CD4-positive, alpha-beta memory T cell (primary cell): ENCODE measurements at regions of chr10 and their contacts with region 1.

Region 1: GRCh38 chr10:97278491-97278989 is 13.9 kb downstream of the ARHGAP19 start:
- DNase-seq: peak in 4 of 5 donors; percentile 47 to 54 (median 53)
- H3K4me3 ChIP-seq: no peak overlapping the region
- H3K4me3 Mint-ChIP-seq: no peak overlapping the region
- H3K27ac ChIP-seq: no peak overlapping the region
- H3K27ac Mint-ChIP-seq: peak overlapping the region in 1 of 7 donors; percentile 51
- H3K4me1 ChIP-seq: peaks cover 4% of the 10 kb centered on the region
- H3K4me1 Mint-ChIP-seq: peaks cover 6 to 12% (median 9%) of the 10 kb centered on the region in 4 donors
- H3K27me3 ChIP-seq: no peaks in the 10 kb centered on the region
- H3K27me3 Mint-ChIP-seq: no peaks in the 10 kb centered on the region

Region 2: DNA sequence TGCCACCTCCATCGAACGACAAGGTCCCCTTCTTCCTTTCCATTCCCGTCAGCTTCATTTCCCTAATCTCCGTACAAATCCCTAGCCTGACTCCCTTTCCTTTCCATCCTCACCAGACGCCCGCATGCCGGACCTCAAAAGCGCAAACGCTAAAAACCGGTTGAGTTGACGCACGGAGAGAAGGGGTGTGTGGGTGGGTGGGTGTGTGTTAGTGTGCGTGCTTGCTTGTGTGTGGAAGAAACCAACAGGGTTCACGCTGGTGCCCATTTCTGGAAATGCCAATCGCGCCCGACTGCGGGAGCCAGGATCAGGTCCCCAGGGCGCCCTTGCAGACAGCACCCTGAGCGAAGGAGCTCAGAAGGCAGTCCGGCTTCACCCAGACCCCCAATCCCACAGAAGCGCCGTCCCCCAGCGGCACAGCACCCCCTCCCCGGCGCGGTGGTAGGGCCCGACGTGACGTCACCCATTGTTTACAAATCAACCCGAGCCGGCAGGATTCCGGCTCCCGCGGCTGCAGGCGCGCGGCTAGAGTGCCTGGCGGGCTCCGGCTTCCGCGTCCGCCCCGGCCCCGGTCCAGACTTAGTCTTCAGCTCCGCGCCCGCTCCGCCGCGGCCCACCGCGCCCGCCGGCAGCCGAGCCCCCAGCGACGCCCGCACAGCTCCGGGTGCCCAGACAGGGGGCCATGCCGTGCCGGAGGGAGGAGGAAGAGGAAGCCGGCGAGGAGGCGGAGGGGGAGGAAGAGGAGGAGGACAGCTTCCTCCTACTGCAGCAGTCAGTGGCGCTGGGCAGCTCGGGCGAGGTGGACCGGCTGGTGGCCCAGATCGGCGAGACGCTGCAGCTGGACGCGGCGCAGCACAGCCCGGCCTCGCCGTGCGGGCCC is 40.5 kb after region 1 on chr10 and contains the start of gene FRAT1:
- CTCF ChIA-PET with region 1: interaction called, 18 read pairs
- POLR2A ChIA-PET with region 1: interaction called, 16 read pairs
- intact Hi-C with region 1: loop called (anchors 2 kb)
- DNase-seq: peak; percentile 90 to 97 (median 94)
- H3K4me3 ChIP-seq: peak within 1 kb of the TSS; percentile 50 to 84
- H3K4me3 Mint-ChIP-seq: peak within 1 kb of the TSS; percentile 93 to 99 (median 96)
- H3K27ac ChIP-seq: peak within 1 kb of the TSS; percentile 99
- H3K27ac Mint-ChIP-seq: peak within 1 kb of the TSS; percentile 96 to 100 (median 99)
- H3K4me1 ChIP-seq: peaks cover 21% of the 10 kb centered on the region
- H3K4me1 Mint-ChIP-seq: peaks cover 16 to 44% (median 31%) of the 10 kb centered on the region in 4 donors
- H3K27me3 ChIP-seq: no peaks in the 10 kb centered on the region
- H3K27me3 Mint-ChIP-seq: peaks cover 0 to 3% of the 10 kb centered on the region in 2 donors
- total RNA-seq, gene FRAT1: 20.2 to 21.8 TPM

Region 3: GRCh38 chr10:97334370-97335175 is 56.0 kb after region 1 on chr10 and contains the start of gene FRAT2:
- CTCF ChIA-PET with region 1: interaction called, 31 read pairs
- POLR2A ChIA-PET with region 1: interaction called, 11 read pairs
- intact Hi-C with region 1: loop called (anchors 2 kb)
- DNase-seq: peak; percentile 86 to 95 (median 92)
- H3K4me3 ChIP-seq: peak within 1 kb of the TSS; percentile 64 to 67
- H3K4me3 Mint-ChIP-seq: peak within 1 kb of the TSS; percentile 88 to 95 (median 92)
- H3K27ac ChIP-seq: peak within 1 kb of the TSS; percentile 98
- H3K27ac Mint-ChIP-seq: peak within 1 kb of the TSS; percentile 88 to 95 (median 93)
- H3K4me1 ChIP-seq: peaks cover 35% of the 10 kb centered on the region
- H3K4me1 Mint-ChIP-seq: peaks cover 26 to 44% (median 34%) of the 10 kb centered on the region in 4 donors
- H3K27me3 ChIP-seq: no peaks in the 10 kb centered on the region
- H3K27me3 Mint-ChIP-seq: peaks cover 0 to 1% of the 10 kb centered on the region in 2 donors
- total RNA-seq, gene FRAT2: 28.7 to 30.4 TPM

Region 4: GRCh38 chr10:97361537-97361901 is 83.0 kb after region 1 on chr10:
- CTCF ChIA-PET with region 1: interaction called, 103 read pairs
- POLR2A ChIA-PET with region 1: no interaction called
- intact Hi-C with region 1: loop called (anchors 2 kb)
- DNase-seq: no peak
- H3K4me3 ChIP-seq: no peak overlapping the region
- H3K4me3 Mint-ChIP-seq: no peak overlapping the region
- H3K27ac ChIP-seq: no peak overlapping the region
- H3K27ac Mint-ChIP-seq: no peak overlapping the region
- H3K4me1 ChIP-seq: no peaks in the 10 kb centered on the region
- H3K4me1 Mint-ChIP-seq: no peaks in the 10 kb centered on the region
- H3K27me3 ChIP-seq: no peaks in the 10 kb centered on the region
- H3K27me3 Mint-ChIP-seq: no peaks in the 10 kb centered on the region

Region 5: DNA sequence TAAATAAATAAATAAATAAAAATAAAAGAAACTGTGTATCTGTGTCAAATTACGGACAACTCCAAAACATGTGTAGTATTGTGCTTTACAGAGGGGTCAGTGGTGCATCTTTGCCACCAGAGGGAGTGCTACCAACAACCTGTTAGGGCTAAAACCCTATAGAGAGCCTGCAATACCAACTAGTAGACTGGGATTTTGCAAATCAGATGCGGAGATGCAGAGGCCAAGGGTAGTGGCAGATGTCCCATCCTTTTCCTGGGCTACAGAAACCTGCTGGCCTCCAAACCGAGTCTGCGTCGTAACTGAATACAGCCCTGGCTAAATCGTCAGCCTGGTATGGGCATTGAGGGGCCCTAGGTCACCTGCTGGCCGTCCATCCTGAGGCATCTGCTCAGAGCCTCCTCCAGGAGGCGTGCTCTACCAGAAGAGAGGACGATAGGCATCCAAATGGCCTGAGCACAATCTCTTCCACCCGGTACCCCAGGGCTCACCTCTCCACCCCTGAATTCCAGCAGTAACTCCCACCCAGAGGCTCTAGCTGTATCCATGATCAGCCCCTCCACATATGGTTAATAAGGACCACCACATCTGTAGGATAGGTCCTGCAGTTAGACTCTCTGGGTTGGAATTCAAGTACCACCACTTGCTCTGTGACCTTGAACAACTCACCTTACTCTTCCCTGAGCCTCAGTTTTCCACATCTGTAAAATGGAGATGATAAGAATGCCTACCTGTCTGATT is 128.8 kb after region 1 on chr10:
- CTCF ChIA-PET with region 1: interaction called, 3 read pairs
- POLR2A ChIA-PET with region 1: no interaction called
- intact Hi-C with region 1: loop called (anchors 2 kb)
- DNase-seq: peak; percentile 74 to 78 (median 77)
- H3K4me3 ChIP-seq: peak overlapping the region; percentile 35 to 48
- H3K4me3 Mint-ChIP-seq: peak overlapping the region in 7 of 8 donors; percentile 36 to 77 (median 74)
- H3K27ac ChIP-seq: no peak overlapping the region
- H3K27ac Mint-ChIP-seq: peak overlapping the region; percentile 54 to 88 (median 78)
- H3K4me1 ChIP-seq: peaks cover 6% of the 10 kb centered on the region
- H3K4me1 Mint-ChIP-seq: peaks cover 3 to 12% (median 9%) of the 10 kb centered on the region in 4 donors
- H3K27me3 ChIP-seq: no peaks in the 10 kb centered on the region
- H3K27me3 Mint-ChIP-seq: no peaks in the 10 kb centered on the region